PC-3 (cell line): ENCODE measurements at regions of chr1 and their contacts with region 1.

Region 1: GRCh38 chr1:214584805-214585766 is 17.9 kb upstream of the CENPF start:
- DNase-seq: peak; percentile 86
- ATAC-seq: peak; percentile 34
- H3K4me3 ChIP-seq: no peak overlapping the region
- H3K27ac ChIP-seq: peak overlapping the region; percentile 2; the same call in 1 of the 2 replicates
- H3K4me1 ChIP-seq: peaks cover 43% of the 10 kb centered on the region
- H3K27me3 ChIP-seq: no peaks in the 10 kb centered on the region
- CTCF ChIP-seq: peak; percentile 97

Region 2: DNA sequence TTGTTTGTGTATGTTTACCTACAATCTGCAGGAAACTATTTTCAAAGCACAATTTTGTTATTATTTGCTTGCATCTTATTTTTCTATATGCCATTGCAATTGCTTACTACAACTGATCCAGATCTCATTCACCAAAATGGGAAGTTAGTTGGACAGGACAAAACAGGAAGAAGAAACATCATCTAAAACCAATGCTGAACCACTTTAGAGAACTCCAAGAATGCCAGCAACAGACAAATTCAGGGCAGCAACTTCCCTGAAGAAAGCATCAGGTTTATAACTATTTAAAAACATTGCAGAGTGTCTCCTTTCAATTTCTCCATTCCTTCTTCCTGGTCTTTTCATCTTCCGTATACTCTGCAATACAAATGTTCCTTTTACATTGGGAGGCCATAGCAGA is 386.5 kb before region 1 on chr1:
- CTCF ChIA-PET with region 1: no interaction called
- POLR2A ChIA-PET with region 1: no interaction called
- intact Hi-C with region 1: no loop called
- DNase-seq: no peak
- ATAC-seq: no peak
- H3K4me3 ChIP-seq: no peak overlapping the region
- H3K27ac ChIP-seq: no peak overlapping the region
- H3K4me1 ChIP-seq: no peaks in the 10 kb centered on the region
- H3K27me3 ChIP-seq: peaks cover 85% of the 10 kb centered on the region
- CTCF ChIP-seq: no peak

Region 3: DNA sequence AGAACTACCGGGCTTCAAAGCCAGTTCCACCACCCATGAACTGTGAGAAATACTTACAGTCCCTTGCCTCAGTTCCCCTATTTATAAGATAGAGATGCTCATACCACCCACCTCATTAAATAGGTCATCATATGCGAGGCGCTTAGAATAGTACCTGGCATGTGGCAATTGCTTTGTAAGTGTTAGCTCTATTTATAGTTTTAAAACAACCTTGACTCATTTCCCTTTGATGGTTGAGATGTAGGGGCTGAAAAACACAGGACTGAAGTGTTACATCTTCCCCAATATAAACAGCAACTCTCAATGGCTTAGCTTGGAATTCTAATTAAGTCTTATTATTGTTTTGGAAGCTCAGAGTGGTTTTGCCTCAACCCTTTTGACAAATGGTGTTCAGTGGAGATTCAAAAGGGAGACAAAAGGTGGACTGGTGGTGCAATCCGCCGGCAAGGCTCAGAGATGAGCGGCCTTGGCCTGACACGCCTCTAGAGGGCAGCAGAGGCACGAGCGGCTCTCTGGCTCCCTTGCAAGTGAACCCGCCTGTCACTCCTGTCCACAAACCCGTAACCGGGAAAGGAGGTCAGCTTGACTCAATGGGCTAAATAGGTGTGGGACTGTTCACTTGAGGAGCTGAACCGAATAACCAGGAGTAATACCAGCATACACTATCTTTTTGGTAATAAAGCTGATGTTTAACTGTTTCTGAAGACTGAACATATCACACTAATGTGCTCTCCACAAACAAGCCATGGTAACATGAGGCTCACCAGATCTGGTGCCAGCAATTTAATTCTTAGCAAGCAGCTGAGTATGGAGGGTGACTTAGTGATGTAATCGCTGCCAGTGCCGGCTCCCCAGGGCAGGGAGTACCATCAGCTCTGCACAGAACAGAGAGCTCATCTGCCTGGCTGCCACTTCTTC is 323.6 kb before region 1 on chr1:
- CTCF ChIA-PET with region 1: no interaction called
- POLR2A ChIA-PET with region 1: interaction called, 5 read pairs
- intact Hi-C with region 1: loop called (anchors 5 kb)
- DNase-seq: peak; percentile 89
- ATAC-seq: peak; percentile 99
- H3K4me3 ChIP-seq: peak overlapping the region; percentile 13; the same call in 1 of the 2 replicates
- H3K27ac ChIP-seq: no peak overlapping the region
- H3K4me1 ChIP-seq: peaks cover 15% of the 10 kb centered on the region
- H3K27me3 ChIP-seq: no peaks in the 10 kb centered on the region
- CTCF ChIP-seq: peak; percentile 99

Region 4: GRCh38 chr1:214362188-214362882 is 222.8 kb before region 1 on chr1:
- CTCF ChIA-PET with region 1: no interaction called
- POLR2A ChIA-PET with region 1: no interaction called
- intact Hi-C with region 1: no loop called
- DNase-seq: no peak
- ATAC-seq: no peak
- H3K4me3 ChIP-seq: no peak overlapping the region
- H3K27ac ChIP-seq: no peak overlapping the region
- H3K4me1 ChIP-seq: no peaks in the 10 kb centered on the region
- H3K27me3 ChIP-seq: no peaks in the 10 kb centered on the region
- CTCF ChIP-seq: no peak

Region 5: DNA sequence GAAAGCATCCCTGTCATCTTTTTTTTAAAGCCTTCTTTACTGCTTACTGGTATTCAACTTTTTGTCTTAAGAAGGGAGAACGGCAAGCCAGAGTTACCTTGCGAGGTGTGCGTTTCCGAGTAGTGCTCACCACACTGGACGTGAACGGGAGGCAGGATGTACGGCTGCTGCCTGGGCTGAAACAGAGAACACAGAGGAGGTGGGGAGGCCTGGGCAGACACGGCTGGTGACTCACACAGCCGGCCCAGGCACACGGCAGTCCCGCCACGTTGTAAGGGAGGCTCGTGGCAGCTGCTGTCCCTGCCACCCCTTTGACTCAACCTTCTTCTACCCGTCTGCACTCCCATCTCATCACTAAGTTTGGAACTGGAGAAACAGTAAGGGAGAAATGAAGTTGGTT is 198.3 kb before region 1 on chr1:
- CTCF ChIA-PET with region 1: interaction called, 8 read pairs
- POLR2A ChIA-PET with region 1: interaction called, 3 read pairs
- intact Hi-C with region 1: loop called (anchors 1 kb)
- DNase-seq: peak; percentile 17
- ATAC-seq: peak; percentile 83
- H3K4me3 ChIP-seq: no peak overlapping the region
- H3K27ac ChIP-seq: no peak overlapping the region
- H3K4me1 ChIP-seq: no peaks in the 10 kb centered on the region; the same call in 1 of the 2 replicates
- H3K27me3 ChIP-seq: no peaks in the 10 kb centered on the region
- CTCF ChIP-seq: no peak

Region 6: DNA sequence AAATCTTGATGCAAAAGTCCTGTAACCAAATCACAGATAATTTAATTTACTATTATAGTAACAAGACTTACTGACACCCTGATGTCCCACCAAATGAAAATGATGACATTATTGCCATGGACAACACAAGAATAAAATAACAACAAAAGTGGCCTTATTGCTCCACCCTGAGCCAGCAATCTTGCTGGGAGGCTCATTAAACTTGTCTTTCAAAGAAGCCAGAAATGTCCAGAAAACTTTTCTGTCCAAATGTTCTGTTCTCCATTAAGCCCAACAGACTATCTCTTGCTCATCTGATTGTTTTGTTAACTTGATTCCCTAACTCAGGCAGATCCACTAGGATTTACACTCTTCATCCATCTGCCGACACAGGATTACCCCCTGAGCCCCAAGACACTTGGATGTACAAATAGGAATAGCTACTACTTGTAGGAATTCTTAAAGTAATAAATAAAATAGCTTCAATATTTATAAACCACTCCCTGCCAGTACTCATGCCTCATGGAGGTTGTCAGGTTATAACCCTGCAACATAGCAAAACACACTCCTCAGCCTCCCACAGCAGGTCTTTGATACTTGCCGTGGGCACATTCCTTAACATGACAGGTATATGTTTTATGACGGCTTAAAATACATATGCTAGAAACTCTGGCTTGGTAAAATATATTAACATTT is 118.5 kb before region 1 on chr1:
- CTCF ChIA-PET with region 1: no interaction called
- POLR2A ChIA-PET with region 1: interaction called, 9 read pairs
- intact Hi-C with region 1: loop called (anchors 1 kb)
- DNase-seq: peak; percentile 81
- ATAC-seq: peak; percentile 58
- H3K4me3 ChIP-seq: peak overlapping the region; percentile 0; the same call in 1 of the 2 replicates
- H3K27ac ChIP-seq: peak overlapping the region; percentile 30
- H3K4me1 ChIP-seq: peaks cover 29% of the 10 kb centered on the region
- H3K27me3 ChIP-seq: no peaks in the 10 kb centered on the region
- CTCF ChIP-seq: no peak

Region 7: GRCh38 chr1:214506972-214507482 is 78.1 kb before region 1 on chr1:
- CTCF ChIA-PET with region 1: interaction called, 4 read pairs
- POLR2A ChIA-PET with region 1: no interaction called
- intact Hi-C with region 1: loop called (anchors 1 kb)
- DNase-seq: peak; percentile 94
- ATAC-seq: peak; percentile 53
- H3K4me3 ChIP-seq: peak overlapping the region; percentile 42
- H3K27ac ChIP-seq: peak overlapping the region; percentile 19; the same call in 1 of the 2 replicates
- H3K4me1 ChIP-seq: peaks cover 42% of the 10 kb centered on the region
- H3K27me3 ChIP-seq: no peaks in the 10 kb centered on the region
- CTCF ChIP-seq: no peak

Region 8: DNA sequence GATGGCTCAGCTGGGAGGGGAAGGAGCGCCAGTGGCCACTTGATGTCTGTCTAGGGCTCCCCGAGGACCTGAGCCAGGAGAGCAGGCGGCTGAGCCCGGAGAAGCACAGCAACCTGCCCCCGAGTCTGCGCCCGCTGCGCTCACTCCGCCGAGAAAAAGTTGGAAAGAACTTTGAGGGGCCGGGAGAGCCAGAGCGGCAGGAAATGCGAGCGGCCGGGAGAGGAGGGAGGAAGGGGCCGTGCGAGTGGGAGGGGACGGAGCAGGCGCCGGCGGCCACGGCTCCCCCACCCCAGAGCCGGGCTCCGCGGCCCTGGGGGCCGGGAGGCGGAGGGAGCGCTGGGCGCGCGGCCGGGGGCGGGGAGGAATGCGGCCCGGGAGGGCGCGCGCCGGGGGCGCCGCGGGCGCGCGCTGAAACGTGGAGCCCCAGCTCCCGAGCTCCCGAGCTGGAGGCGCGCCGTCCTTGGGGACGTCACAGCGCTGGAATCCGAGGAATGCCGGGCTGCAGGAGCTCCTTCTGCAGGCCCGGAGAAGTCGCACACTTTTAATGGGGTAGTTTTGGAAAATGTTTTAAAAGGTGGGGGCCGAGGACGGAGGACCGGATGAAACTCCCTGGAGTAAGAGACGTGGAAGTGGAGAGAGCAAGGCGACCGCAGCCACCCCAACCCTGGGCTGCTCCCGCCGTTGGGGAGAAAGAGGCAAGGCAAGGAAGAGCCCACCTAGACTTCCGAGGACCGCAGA is 33.5 kb before region 1 on chr1 and contains the start of gene PTPN14:
- CTCF ChIA-PET with region 1: interaction called, 11 read pairs
- POLR2A ChIA-PET with region 1: interaction called, 13 read pairs
- intact Hi-C with region 1: loop called (anchors 1 kb)
- DNase-seq: peak; percentile 99
- ATAC-seq: peak; percentile 71
- H3K4me3 ChIP-seq: peak within 1 kb of the TSS; percentile 88
- H3K27ac ChIP-seq: peak within 1 kb of the TSS; percentile 95
- H3K4me1 ChIP-seq: peaks cover 39% of the 10 kb centered on the region
- H3K27me3 ChIP-seq: no peaks in the 10 kb centered on the region
- CTCF ChIP-seq: peak; percentile 52; the same call in 1 of the 2 replicates
- total RNA-seq, gene PTPN14: 12.6 and 17.1 TPM in 2 replicates